Thyroid gland (tissue), 4 donors: ENCODE measurements at regions of chr3 and their contacts with region 1.

Region 1: GRCh38 chr3:133927540-133928066 is 31.9 kb upstream of the RAB6B start:
- DNase-seq: peak; percentile 67 to 68
- H3K4me3 ChIP-seq: peak overlapping the region in 2 of 3 donors; percentile 32 to 43
- H3K27ac ChIP-seq: no peak overlapping the region
- H3K4me1 ChIP-seq: peaks cover 0 to 6% of the 10 kb centered on the region in 2 donors
- H3K27me3 ChIP-seq: no peaks in the 10 kb centered on the region
- CTCF ChIP-seq: peak in 5 of 6 experiments; percentile 35 to 98 (median 82)
- POLR2A ChIP-seq: no peak

Region 2: GRCh38 chr3:133821767-133822638 is 105.6 kb before region 1 on chr3:
- intact Hi-C with region 1: loop called (anchors 5 kb)
- DNase-seq: peak; percentile 27 to 84
- H3K4me3 ChIP-seq: no peak overlapping the region
- H3K27ac ChIP-seq: no peak overlapping the region
- H3K4me1 ChIP-seq: no peaks in the 10 kb centered on the region
- H3K27me3 ChIP-seq: no peaks in the 10 kb centered on the region
- CTCF ChIP-seq: peak in 2 of 6 experiments; percentile 30 to 42
- POLR2A ChIP-seq: no peak

Region 3: DNA sequence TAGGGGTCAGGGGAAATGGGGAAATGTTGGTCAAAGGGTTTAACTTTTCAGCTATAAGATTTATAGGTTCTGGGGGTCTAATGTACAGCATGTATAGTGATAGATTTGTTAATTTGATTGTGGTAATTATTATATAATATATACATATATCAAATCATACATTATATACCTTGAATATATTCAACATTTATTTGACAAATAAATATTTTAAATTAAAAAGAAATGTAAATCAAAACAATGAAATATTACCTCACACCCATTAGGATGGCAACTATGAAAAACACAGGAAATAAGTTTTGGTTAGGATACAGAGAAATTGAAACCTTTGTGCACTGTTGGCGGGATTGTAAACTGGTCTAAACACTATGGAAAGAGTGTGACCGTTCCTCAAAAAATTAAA is 187.1 kb after region 1 on chr3:
- intact Hi-C with region 1: no loop called
- DNase-seq: no peak
- H3K4me3 ChIP-seq: no peak overlapping the region
- H3K27ac ChIP-seq: no peak overlapping the region
- H3K4me1 ChIP-seq: no peaks in the 10 kb centered on the region
- H3K27me3 ChIP-seq: no peaks in the 10 kb centered on the region
- CTCF ChIP-seq: no peak
- POLR2A ChIP-seq: no peak

Region 4: GRCh38 chr3:134212906-134213665 is 285.5 kb after region 1 on chr3:
- intact Hi-C with region 1: loop called (anchors 10 kb)
- DNase-seq: peak; percentile 84 to 90
- H3K4me3 ChIP-seq: no peak overlapping the region
- H3K27ac ChIP-seq: no peak overlapping the region
- H3K4me1 ChIP-seq: peaks cover 0 to 8% of the 10 kb centered on the region in 2 donors
- H3K27me3 ChIP-seq: no peaks in the 10 kb centered on the region
- CTCF ChIP-seq: peak; percentile 92 to 98 (median 94)
- POLR2A ChIP-seq: no peak

Region 5: GRCh38 chr3:134722969-134723368 is 795.4 kb after region 1 on chr3:
- intact Hi-C with region 1: no loop called
- DNase-seq: no peak
- H3K4me3 ChIP-seq: no peak overlapping the region
- H3K27ac ChIP-seq: no peak overlapping the region
- H3K4me1 ChIP-seq: no peaks in the 10 kb centered on the region
- H3K27me3 ChIP-seq: no peaks in the 10 kb centered on the region
- CTCF ChIP-seq: no peak
- POLR2A ChIP-seq: no peak